H1 (cell line): ENCODE measurements at regions of chr2 and their contacts with region 1.

Region 1: GRCh38 chr2:223957092-223957851 is at the start of gene MRPL44:
- DNase-seq: peak; percentile 75 to 99
- H3K4me3 ChIP-seq: peak within 1 kb of the TSS; percentile 89 to 93 (median 91)
- H3K27ac ChIP-seq: peak within 1 kb of the TSS; percentile 90
- H3K4me1 ChIP-seq: peaks cover 3 to 13% (median 5%) of the 10 kb centered on the region in 4 experiments; a peak in 4 of 7 replicates
- H3K27me3 ChIP-seq: no peaks in the 10 kb centered on the region
- CTCF ChIP-seq: no peak
- EP300 ChIP-seq: peak; percentile 6 to 92
- POLR2A ChIP-seq: peak; percentile 90 to 92
- RAD21 ChIP-seq: 0 out of 4 replicates have a peak, but pooled peaks of 1 of the 2 experiments have one; percentile 24
- total RNA-seq, gene MRPL44: 50.4 and 53.2 TPM in 2 replicates

Region 2: GRCh38 chr2:223944703-223945531 is 12.4 kb before region 1 on chr2 and contains the start of gene WDFY1:
- CTCF ChIA-PET with region 1: interaction called, 4 read pairs
- POLR2A ChIA-PET with region 1: interaction called, 19 read pairs
- DNase-seq: peak; percentile 54 to 91
- H3K4me3 ChIP-seq: peak within 1 kb of the TSS; percentile 61 to 90 (median 84)
- H3K27ac ChIP-seq: peak within 1 kb of the TSS; percentile 82
- H3K4me1 ChIP-seq: peaks cover 0 to 23% (median 14%) of the 10 kb centered on the region in 4 experiments; a peak in 5 of 7 replicates
- H3K27me3 ChIP-seq: no peaks in the 10 kb centered on the region
- CTCF ChIP-seq: no peak
- EP300 ChIP-seq: peak in 1 of 2 experiments; percentile 93; a peak in 2 of 3 replicates
- POLR2A ChIP-seq: peak; percentile 62 to 84
- RAD21 ChIP-seq: peak in 1 of 2 experiments; percentile 26; a peak in 1 of 4 replicates
- total RNA-seq, gene WDFY1: 92.9 and 94.7 TPM in 2 replicates